Left lung (tissue), 14 donors: ENCODE measurements at regions of chr7 and their contacts with region 1.

Region 1: DNA sequence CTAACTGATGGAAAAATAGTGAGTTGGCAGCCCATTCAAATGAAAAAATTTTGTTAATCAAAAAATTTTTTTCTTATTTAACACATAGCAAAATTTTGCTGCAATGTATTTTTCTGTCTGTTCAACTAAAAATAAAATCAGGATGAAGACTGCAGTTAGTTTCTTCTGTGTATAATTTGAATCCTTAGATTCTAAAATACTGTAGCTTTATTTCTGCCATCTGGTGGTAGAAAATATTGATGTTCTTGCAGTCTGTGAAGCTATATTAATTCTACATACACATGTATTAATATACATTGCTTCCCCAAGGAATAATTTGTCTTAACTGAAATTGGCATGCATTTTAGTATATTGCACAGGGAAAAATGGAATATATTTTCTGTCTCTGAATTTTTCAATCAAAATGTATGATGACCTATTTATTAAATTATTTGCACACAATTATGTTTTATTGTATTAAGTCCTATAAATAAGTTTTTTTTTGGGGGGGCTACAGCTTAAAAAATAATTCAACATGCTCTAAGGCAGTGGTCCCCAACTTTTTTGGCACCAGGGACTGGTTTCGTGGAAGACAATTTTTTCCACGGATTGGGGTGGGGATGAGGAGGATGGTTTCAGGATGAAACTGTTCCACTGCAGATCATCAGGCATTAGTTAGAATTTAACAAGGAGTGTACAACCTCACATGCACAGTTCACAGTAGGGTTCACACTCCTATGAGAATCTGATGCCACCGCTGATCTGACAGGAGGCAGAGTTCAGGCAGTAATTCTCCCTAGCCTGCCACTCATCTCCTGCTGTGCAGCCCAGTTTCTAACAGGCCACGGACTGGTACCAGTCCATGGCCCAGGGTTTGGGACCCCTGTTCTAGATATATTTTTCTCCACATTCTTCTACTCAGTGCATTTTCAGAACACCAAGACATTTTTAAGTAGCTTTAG is 119.4 kb downstream of the GNAT3 start:
- DNase-seq: peak in 2 of 4 donors; percentile 26 to 50
- ATAC-seq: peak; percentile 53
- H3K4me3 ChIP-seq: no peak overlapping the region
- H3K27ac ChIP-seq: no peak overlapping the region
- H3K4me1 ChIP-seq: no peaks in the 10 kb centered on the region
- H3K27me3 ChIP-seq: no peaks in the 10 kb centered on the region
- CTCF ChIP-seq: peak in 1 of 2 donors; percentile 32

Region 2: DNA sequence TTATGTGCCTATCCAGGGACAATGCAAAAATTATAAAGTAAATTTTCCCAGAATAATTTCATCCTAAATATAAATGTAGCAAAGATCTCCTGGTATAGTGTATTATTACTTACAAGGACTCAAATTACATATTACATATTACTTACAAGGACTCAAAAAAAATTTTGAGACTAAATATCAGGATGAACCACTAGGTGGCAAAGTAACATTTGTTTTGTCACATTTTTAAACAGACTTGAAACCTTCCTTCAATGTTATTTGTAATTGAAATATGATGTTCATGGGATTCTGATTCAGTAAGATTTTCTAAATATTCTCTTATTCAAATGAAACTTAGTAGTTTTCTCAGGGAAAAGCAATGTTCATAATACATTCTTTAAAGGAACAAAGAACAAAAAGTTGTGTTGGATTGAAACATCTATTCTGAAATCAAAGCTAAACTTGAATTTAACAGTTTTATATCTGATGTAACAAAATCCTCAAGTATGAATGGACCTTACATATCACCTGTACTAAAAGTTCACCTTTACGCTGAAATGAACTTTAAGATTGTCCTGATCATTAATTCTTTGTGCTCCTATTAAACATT is 332.2 kb before region 1 on chr7:
- intact Hi-C with region 1: loop called in 1 of 2 experiments (anchors 10 kb)
- DNase-seq: peak in 2 of 4 donors; percentile 51 to 71
- ATAC-seq: peak; percentile 60
- H3K4me3 ChIP-seq: no peak overlapping the region
- H3K27ac ChIP-seq: no peak overlapping the region
- H3K4me1 ChIP-seq: no peaks in the 10 kb centered on the region
- H3K27me3 ChIP-seq: no peaks in the 10 kb centered on the region
- CTCF ChIP-seq: peak; percentile 30 to 44

Region 3: GRCh38 chr7:80288175-80289122 is 104.0 kb before region 1 on chr7:
- intact Hi-C with region 1: loop called in 1 of 2 experiments (anchors 10 kb)
- DNase-seq: no peak
- ATAC-seq: peak; percentile 44
- H3K4me3 ChIP-seq: no peak overlapping the region
- H3K27ac ChIP-seq: no peak overlapping the region
- H3K4me1 ChIP-seq: no peaks in the 10 kb centered on the region
- H3K27me3 ChIP-seq: no peaks in the 10 kb centered on the region
- CTCF ChIP-seq: no peak